Heart left ventricle (tissue), 16 donors: ENCODE measurements at regions of chr1 and their contacts with region 1.

Region 1: DNA sequence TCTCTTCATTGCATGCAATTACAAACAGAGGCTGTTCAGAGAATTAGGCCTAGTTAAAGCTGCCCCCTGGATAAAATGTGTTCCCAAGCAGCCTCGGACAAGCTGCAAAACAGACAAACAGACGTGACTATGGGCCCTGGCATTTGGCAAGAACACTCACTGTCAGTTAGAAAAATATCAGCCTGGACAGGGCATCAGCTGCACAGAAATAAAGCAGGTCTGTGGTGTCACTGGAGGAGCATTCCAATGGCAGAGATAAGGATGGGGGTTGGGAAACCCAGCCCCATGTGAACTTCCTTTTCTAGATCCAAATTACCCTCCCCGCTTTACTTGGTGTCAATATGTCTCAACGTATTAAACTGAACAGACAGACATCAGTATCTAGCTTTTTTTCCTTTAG is 177.1 kb downstream of the GPATCH2 start:
- DNase-seq: peak in 4 of 5 donors; percentile 69 to 81 (median 74)
- ATAC-seq: peak; percentile 96 to 98 (median 98)
- H3K4me3 ChIP-seq: no peak overlapping the region
- H3K27ac ChIP-seq: peak overlapping the region; percentile 39 to 87 (median 77)
- H3K4me1 ChIP-seq: peaks cover 0 to 22% (median 4%) of the 10 kb centered on the region in 12 donors
- H3K27me3 ChIP-seq: no peaks in the 10 kb centered on the region
- CTCF ChIP-seq: peak in 1 of 12 donors; percentile 14
- POLR2A ChIP-seq: no peak

Region 2: GRCh38 chr1:216961516-216961915 is 492.3 kb before region 1 on chr1:
- intact Hi-C with region 1: loop called in 1 of 10 experiments (anchors 10 kb)
- DNase-seq: no peak
- ATAC-seq: no peak
- H3K4me3 ChIP-seq: no peak overlapping the region
- H3K27ac ChIP-seq: no peak overlapping the region
- H3K4me1 ChIP-seq: peaks cover 0 to 8% (median 0%) of the 10 kb centered on the region in 12 donors
- H3K27me3 ChIP-seq: no peaks in the 10 kb centered on the region
- CTCF ChIP-seq: no peak
- POLR2A ChIP-seq: no peak

Region 3: GRCh38 chr1:217369271-217369981 is 84.4 kb before region 1 on chr1:
- intact Hi-C with region 1: no loop called
- DNase-seq: no peak
- ATAC-seq: no peak
- H3K4me3 ChIP-seq: no peak overlapping the region
- H3K27ac ChIP-seq: no peak overlapping the region
- H3K4me1 ChIP-seq: no peaks in the 10 kb centered on the region
- H3K27me3 ChIP-seq: no peaks in the 10 kb centered on the region
- CTCF ChIP-seq: no peak
- POLR2A ChIP-seq: no peak

Region 4: DNA sequence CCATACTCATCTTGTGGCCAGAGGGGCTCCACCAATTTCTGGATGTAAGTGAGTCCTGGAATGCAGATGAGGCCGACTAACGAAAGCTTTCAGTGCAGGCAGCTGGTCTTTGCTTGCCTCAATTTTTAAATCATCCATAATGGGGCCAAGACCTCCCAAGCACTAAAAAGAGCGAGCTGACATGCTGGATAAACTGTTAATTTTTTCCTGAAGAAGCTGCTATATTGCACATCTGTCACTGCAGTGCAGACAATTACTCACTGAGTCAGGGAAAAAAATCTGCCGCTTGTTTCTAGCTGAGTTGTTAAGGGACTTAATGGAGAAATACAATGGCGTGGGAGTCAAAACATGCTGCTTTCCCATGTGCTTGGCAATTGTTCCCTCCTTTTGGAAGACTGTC is 28.4 kb before region 1 on chr1:
- intact Hi-C with region 1: no loop called
- DNase-seq: no peak
- ATAC-seq: peak in 3 of 4 donors; percentile 18 to 67 (median 51)
- H3K4me3 ChIP-seq: no peak overlapping the region
- H3K27ac ChIP-seq: no peak overlapping the region
- H3K4me1 ChIP-seq: no peaks in the 10 kb centered on the region
- H3K27me3 ChIP-seq: no peaks in the 10 kb centered on the region
- CTCF ChIP-seq: no peak
- POLR2A ChIP-seq: no peak

Region 5: GRCh38 chr1:217528271-217528670 is 74.5 kb after region 1 on chr1:
- intact Hi-C with region 1: loop called in 2 of 10 experiments (anchors 5 to 10 kb)
- DNase-seq: no peak
- ATAC-seq: peak in 1 of 4 donors; percentile 27
- H3K4me3 ChIP-seq: no peak overlapping the region
- H3K27ac ChIP-seq: no peak overlapping the region
- H3K4me1 ChIP-seq: peaks cover 0 to 17% (median 4%) of the 10 kb centered on the region in 12 donors
- H3K27me3 ChIP-seq: no peaks in the 10 kb centered on the region
- CTCF ChIP-seq: no peak
- POLR2A ChIP-seq: no peak